Sigmoid colon (tissue), 7 donors: ENCODE measurements at regions of chr20 and their contacts with region 1.

Region 1: DNA sequence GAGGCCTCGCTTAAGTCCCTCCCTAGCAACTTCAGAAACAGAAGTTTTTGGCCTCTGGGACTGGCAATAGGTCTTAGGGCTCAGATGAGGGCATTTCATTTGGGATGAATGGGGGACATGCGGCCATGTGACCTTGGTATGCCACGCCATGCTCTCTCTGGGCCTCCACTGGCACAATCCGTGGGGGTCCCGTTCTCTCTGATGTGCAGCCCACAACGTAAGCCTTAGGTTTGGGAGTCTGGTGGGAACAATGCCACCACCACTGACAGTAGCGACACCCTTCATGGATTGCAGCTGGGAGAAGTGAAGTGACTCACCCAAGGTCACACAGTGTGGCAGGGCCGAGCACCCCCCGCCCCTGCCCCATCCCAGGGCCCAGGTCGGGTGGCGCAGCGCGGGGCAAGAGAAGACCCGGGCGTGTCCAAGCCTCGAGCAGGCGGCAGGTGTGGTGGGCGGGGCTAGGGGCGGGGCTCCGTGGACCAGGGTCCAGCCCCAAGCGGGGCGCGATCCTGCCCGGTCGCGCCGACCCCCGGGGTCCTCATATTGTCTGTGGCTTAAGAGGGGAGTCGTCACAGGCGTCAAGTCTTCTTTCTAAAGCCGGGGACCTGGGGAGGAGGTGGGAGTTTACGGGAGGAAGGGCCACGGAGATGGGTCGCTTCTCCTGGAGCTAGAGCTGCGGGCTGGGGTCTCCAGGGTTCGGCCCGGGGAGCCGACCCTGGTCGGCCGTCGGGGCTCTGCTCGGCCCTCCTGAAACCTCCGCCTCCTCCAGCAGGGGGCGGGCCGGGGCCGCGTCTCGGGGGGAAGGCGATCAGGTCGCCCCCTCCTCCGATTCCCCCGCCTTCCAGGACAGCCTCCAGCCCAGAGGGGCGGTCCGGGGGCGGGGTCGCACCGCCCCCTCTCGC is 698 bp upstream of the CEBPB start:
- DNase-seq: peak; percentile 97
- H3K4me3 ChIP-seq: peak overlapping the region; percentile 79 to 91 (median 86)
- H3K27ac ChIP-seq: peak overlapping the region; percentile 93 to 100 (median 98)
- H3K4me1 ChIP-seq: peaks cover 0 to 40% (median 31%) of the 10 kb centered on the region in 4 donors
- H3K27me3 ChIP-seq: no peaks in the 10 kb centered on the region
- CTCF ChIP-seq: peak; percentile 68 to 89 (median 78)
- EP300 ChIP-seq: peak in 1 of 4 donors; percentile 5
- POLR2A ChIP-seq: no peak

Region 2: DNA sequence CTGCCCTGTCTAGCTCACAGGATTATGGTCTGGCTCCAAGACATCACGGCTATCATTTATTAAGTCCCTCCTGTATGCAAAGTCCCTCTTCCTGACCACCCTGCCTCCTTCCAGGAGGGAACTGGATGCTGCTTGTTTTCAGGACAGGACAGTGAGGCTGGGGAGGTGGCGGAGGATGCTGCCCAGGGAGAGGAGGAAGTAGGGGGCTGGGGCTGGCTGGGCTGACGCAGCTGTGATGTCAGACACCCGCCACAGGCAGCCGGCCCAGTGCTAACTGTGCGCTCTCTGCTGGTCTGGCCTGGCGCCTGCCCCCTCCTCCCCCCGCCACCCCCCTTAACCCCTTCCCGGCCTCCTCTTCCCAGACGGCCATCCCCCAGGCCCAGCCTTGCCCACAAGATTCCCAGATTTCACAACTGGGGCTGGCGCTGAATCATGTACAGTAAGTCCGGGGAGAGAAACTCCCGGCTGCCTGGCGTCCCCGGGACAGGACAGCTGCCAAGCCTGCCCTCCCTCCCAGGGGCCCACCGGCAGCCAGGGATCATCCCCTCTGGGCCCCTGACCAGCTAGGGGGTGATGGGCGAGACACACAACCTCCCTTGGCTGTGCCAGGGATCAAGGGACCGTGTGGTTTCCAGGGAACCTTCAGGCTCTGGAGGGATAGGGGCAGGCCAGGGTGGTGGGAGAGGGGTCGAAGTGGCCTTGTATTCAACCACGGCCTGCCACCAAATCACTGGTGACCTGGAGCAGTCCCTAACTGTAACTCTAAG is 118.8 kb after region 1 on chr20:
- intact Hi-C with region 1: loop called (anchors 1 kb)
- DNase-seq: peak; percentile 99
- H3K4me3 ChIP-seq: peak overlapping the region in 3 of 4 donors; percentile 4 to 25 (median 11)
- H3K27ac ChIP-seq: peak overlapping the region; percentile 82 to 98 (median 92)
- H3K4me1 ChIP-seq: peaks cover 4 to 82% (median 79%) of the 10 kb centered on the region in 4 donors
- H3K27me3 ChIP-seq: no peaks in the 10 kb centered on the region
- CTCF ChIP-seq: no peak
- EP300 ChIP-seq: peak in 3 of 4 donors; percentile 35 to 79 (median 77)
- POLR2A ChIP-seq: peak; percentile 50 to 73

Region 3: DNA sequence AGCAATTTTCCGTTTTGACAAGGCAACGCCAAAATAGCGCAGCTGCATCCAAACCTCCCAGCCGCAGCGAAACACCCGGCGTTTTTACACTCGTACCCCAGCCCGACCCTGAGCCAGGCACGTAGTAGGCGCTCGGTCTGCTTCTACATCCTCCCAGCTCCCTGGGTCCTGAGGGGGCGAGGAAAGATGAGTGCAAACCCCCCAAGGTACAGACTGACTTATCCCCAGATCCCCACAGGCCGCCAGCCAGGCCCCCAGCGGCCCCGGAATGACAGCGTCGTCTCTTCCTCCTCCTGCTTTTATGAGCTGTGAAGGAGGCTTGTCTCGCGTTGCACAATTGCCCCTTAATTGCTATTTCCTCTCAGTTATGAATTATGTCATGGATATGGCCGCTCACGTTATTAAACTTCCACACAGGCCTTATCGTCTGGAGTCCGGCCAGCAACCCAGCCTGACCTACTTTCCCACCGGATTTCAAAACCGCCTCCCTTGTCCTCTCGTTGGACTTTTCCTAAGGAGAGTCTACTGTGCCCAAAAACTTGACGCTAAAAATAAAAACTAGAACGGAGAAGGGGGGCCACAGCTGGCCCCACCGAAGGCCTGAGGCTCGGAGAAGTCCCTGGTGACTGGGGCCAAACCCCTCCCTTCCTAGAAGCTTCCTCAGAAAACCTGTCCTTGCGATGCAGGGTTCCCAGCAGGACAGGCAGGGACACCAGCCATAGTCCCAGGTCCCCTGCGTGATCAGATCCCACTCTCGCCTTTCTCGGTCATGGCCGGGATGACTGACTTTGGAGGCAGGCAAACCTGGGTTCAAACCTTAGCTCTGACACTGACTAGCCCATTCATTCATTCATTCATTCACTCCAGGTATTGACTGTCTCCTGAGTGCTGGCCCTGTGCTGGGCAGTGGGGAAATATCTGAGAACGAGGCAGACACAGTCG is 189.4 kb after region 1 on chr20:
- intact Hi-C with region 1: loop called (anchors 2 kb)
- DNase-seq: peak; percentile 98
- H3K4me3 ChIP-seq: peak overlapping the region in 2 of 4 donors; percentile 17 to 21
- H3K27ac ChIP-seq: peak overlapping the region; percentile 75 to 83 (median 78)
- H3K4me1 ChIP-seq: peaks cover 0 to 54% (median 49%) of the 10 kb centered on the region in 4 donors
- H3K27me3 ChIP-seq: no peaks in the 10 kb centered on the region
- CTCF ChIP-seq: no peak
- EP300 ChIP-seq: peak in 3 of 4 donors; percentile 9 to 75 (median 63)
- POLR2A ChIP-seq: peak; percentile 60 to 71

Region 4: GRCh38 chr20:50460460-50461267 is 270.7 kb after region 1 on chr20:
- intact Hi-C with region 1: loop called (anchors 1 kb)
- DNase-seq: peak; percentile 95
- H3K4me3 ChIP-seq: no peak overlapping the region
- H3K27ac ChIP-seq: peak overlapping the region; percentile 35 to 70 (median 43)
- H3K4me1 ChIP-seq: peaks cover 0 to 22% (median 14%) of the 10 kb centered on the region in 4 donors
- H3K27me3 ChIP-seq: no peaks in the 10 kb centered on the region
- CTCF ChIP-seq: peak; percentile 90 to 98 (median 97)
- EP300 ChIP-seq: no peak
- POLR2A ChIP-seq: no peak

Region 5: DNA sequence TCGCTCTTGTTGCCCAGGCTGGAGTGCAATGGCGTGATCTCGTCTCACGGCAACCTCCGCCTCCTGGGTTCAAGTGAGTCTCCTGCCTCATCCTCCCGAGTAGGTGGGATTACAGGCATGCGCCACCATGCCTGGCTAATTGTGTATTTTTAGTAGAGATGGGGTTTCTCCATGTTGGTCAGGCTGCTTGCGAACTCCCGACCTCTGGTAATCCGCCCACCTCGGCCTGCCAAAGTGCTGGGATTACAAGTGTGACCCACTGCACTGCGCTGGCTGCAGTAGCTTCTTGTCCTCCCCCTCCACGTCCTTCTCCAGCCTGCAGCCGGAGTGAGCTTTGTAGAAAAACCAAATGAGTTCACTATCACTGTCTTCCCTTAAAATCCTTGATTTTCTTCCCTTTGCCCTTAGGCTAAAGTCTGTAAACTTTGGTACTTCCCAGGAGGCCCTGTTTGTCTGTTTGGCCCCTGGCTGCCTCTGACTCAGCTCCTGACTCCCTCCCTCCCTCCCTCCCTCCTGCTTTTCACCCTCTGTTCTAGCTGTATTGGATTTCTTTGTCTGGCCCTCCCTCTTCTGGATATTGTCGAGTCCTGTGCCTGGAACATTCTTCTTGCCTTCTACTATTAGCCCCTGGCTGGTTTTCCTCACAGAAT is 554.3 kb after region 1 on chr20:
- intact Hi-C with region 1: loop called (anchors 5 kb)
- DNase-seq: peak; percentile 90
- H3K4me3 ChIP-seq: no peak overlapping the region
- H3K27ac ChIP-seq: peak overlapping the region; percentile 79 to 87 (median 84)
- H3K4me1 ChIP-seq: peaks cover 0 to 46% (median 35%) of the 10 kb centered on the region in 4 donors
- H3K27me3 ChIP-seq: no peaks in the 10 kb centered on the region
- CTCF ChIP-seq: peak in 1 of 4 experiments; percentile 41
- EP300 ChIP-seq: no peak
- POLR2A ChIP-seq: no peak